Activated CD8-positive, alpha-beta T cell treated with anti-CD3 and anti-CD28 coated beads for 36 hours (primary cell): ENCODE measurements at regions of chr2 and their contacts with region 1.

Region 1: GRCh38 chr2:98691303-98691702 is 39.6 kb downstream of the MGAT4A start:
- DNase-seq: no peak
- ATAC-seq: peak; percentile 48
- H3K4me3 Mint-ChIP-seq: no peak overlapping the region
- H3K27ac Mint-ChIP-seq: peak overlapping the region; percentile 83
- H3K4me1 Mint-ChIP-seq: peaks cover 81% of the 10 kb centered on the region
- H3K27me3 Mint-ChIP-seq: no peaks in the 10 kb centered on the region
- CTCF ChIP-seq: no peak

Region 2: DNA sequence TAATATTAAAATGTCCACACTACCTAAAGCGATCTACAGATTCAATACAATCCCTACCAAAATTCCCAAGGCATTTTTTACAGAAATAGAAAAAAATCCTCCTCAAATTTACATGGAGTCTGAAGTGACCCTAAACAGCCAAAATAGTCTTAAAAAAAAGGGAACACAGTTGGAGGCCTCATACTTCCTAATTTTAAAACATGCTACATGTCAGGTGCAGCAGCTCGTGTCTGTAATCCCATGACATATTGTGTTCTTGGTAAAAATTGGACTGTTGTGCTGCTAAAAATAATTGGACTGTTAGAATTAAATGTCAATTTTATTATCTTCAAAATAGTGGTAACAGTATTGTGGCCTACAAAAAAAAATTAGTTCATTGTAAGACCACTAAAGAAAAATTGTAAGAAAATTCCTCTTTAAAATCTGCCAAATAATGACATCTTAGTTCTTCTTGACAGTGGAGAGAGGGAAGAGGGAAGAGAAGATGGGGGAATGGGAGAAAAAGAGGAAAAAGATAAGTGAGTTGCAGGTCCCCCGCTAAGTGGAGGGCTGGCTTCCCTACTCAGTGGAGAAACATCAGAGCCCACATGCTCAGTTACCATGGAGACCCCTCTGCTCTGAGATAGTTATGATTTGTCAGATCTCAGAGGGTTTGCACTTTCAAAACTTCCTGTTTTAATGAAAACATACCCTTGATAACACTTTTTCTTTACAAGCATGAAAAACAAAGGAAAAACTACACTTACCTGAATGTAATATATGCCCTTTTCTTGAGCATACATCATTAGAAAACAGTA is 36.4 kb before region 1 on chr2:
- CTCF ChIA-PET with region 1: interaction called, 4 read pairs
- POLR2A ChIA-PET with region 1: interaction called, 4 read pairs
- intact Hi-C with region 1: loop called (anchors 5 kb)
- DNase-seq: peak; percentile 76
- ATAC-seq: peak; percentile 64
- H3K4me3 Mint-ChIP-seq: peak overlapping the region; percentile 51
- H3K27ac Mint-ChIP-seq: peak overlapping the region; percentile 88
- H3K4me1 Mint-ChIP-seq: peaks cover 78% of the 10 kb centered on the region
- H3K27me3 Mint-ChIP-seq: no peaks in the 10 kb centered on the region
- CTCF ChIP-seq: no peak

Region 3: GRCh38 chr2:98702858-98703620 is 11.7 kb after region 1 on chr2:
- CTCF ChIA-PET with region 1: interaction called, 13 read pairs
- POLR2A ChIA-PET with region 1: interaction called, 5 read pairs
- intact Hi-C with region 1: no loop called
- DNase-seq: no peak
- ATAC-seq: peak; percentile 21
- H3K4me3 Mint-ChIP-seq: peak overlapping the region; percentile 62
- H3K27ac Mint-ChIP-seq: peak overlapping the region; percentile 78
- H3K4me1 Mint-ChIP-seq: peaks cover 68% of the 10 kb centered on the region
- H3K27me3 Mint-ChIP-seq: no peaks in the 10 kb centered on the region
- CTCF ChIP-seq: peak; percentile 20